ENCODE measurements at regions of chr20 and their contacts with region 1.

Region 1: GRCh38 chr20:6767536-6768227 is at the start of gene BMP2:
- DNase-seq: peak; percentile 74
- H3K4me3 ChIP-seq: peak within 1 kb of the TSS; percentile 87 to 99 (median 92)
- H3K27ac ChIP-seq: peak within 1 kb of the TSS; percentile 61
- H3K4me1 ChIP-seq: peaks cover 21% of the 10 kb centered on the region
- H3K27me3 ChIP-seq: no peaks in the 10 kb centered on the region
- CTCF ChIP-seq: no peak
- POLR2A ChIP-seq: peak; percentile 46
- total RNA-seq, gene BMP2: 11.1 and 15.7 TPM in 2 replicates

Region 2: GRCh38 chr20:6178537-6178936 is 589.1 kb before region 1 on chr20:
- CTCF ChIA-PET with region 1: no interaction called
- POLR2A ChIA-PET with region 1: no interaction called
- dilution Hi-C with region 1: no loop called
- intact Hi-C with region 1: loop called (anchors 5 kb)
- DNase-seq: peak; percentile 67
- H3K4me3 ChIP-seq: no peak overlapping the region
- H3K27ac ChIP-seq: no peak overlapping the region
- H3K4me1 ChIP-seq: no peaks in the 10 kb centered on the region
- H3K27me3 ChIP-seq: peaks cover 0 to 2% of the 10 kb centered on the region in 2 experiments
- CTCF ChIP-seq: peak; percentile 29 to 36
- POLR2A ChIP-seq: no peak

Region 3: GRCh38 chr20:6583134-6583738 is 184.4 kb before region 1 on chr20:
- CTCF ChIA-PET with region 1: interaction called, 18 read pairs
- POLR2A ChIA-PET with region 1: no interaction called
- dilution Hi-C with region 1: no loop called
- intact Hi-C with region 1: loop called (anchors 1 kb)
- DNase-seq: peak; percentile 78
- H3K4me3 ChIP-seq: no peak overlapping the region
- H3K27ac ChIP-seq: peak overlapping the region; percentile 24
- H3K4me1 ChIP-seq: peaks cover 15% of the 10 kb centered on the region
- H3K27me3 ChIP-seq: no peaks in the 10 kb centered on the region
- CTCF ChIP-seq: peak; percentile 56 to 61
- POLR2A ChIP-seq: no peak

Region 4: GRCh38 chr20:6700563-6701329 is 66.9 kb before region 1 on chr20:
- CTCF ChIA-PET with region 1: interaction called, 7 read pairs
- POLR2A ChIA-PET with region 1: no interaction called
- dilution Hi-C with region 1: no loop called
- intact Hi-C with region 1: loop called (anchors 2 kb)
- DNase-seq: peak; percentile 90
- H3K4me3 ChIP-seq: no peak overlapping the region
- H3K27ac ChIP-seq: peak overlapping the region; percentile 45
- H3K4me1 ChIP-seq: peaks cover 68% of the 10 kb centered on the region
- H3K27me3 ChIP-seq: no peaks in the 10 kb centered on the region
- CTCF ChIP-seq: no peak
- POLR2A ChIP-seq: no peak

Region 5: GRCh38 chr20:6746901-6747609 is 20.6 kb before region 1 on chr20:
- CTCF ChIA-PET with region 1: no interaction called
- POLR2A ChIA-PET with region 1: no interaction called
- dilution Hi-C with region 1: no loop called
- intact Hi-C with region 1: loop called (anchors 2 kb)
- DNase-seq: peak; percentile 69
- H3K4me3 ChIP-seq: no peak overlapping the region
- H3K27ac ChIP-seq: no peak overlapping the region
- H3K4me1 ChIP-seq: peaks cover 13% of the 10 kb centered on the region
- H3K27me3 ChIP-seq: peaks cover 5 to 6% of the 10 kb centered on the region in 2 experiments
- CTCF ChIP-seq: no peak
- POLR2A ChIP-seq: no peak

Region 6: DNA sequence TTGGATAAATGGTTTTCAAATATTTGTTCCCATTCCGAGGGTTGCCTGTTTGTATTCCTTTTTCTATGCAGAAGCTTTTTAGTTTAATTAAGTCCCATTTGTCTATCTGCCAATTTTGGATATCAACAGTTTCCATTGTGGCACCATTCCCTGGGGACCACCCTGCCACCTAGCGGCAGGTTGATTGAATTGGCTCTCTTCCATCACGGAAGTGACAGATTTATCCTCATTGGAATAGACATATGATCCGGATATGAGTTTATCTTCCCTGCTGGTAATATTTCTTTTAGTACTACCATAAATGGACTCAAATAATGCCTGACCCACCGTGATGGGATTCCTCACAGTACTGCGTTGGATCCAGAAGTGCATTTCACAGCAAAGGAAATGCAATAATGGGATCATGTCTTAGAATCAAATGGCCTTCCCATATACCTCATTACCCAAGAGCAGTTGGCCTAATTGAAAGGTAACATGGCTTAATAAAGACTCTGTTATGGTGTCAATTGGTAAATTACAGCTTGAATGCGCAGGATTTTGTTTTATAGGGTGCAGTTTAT is 326.8 kb after region 1 on chr20:
- CTCF ChIA-PET with region 1: no interaction called
- POLR2A ChIA-PET with region 1: no interaction called
- dilution Hi-C with region 1: no loop called
- intact Hi-C with region 1: loop called (anchors 5 kb)
- DNase-seq: peak; percentile 46
- H3K4me3 ChIP-seq: no peak overlapping the region
- H3K27ac ChIP-seq: no peak overlapping the region
- H3K4me1 ChIP-seq: peaks cover 6% of the 10 kb centered on the region
- H3K27me3 ChIP-seq: no peaks in the 10 kb centered on the region
- CTCF ChIP-seq: peak; percentile 52 to 60
- POLR2A ChIP-seq: no peak

Region 7: DNA sequence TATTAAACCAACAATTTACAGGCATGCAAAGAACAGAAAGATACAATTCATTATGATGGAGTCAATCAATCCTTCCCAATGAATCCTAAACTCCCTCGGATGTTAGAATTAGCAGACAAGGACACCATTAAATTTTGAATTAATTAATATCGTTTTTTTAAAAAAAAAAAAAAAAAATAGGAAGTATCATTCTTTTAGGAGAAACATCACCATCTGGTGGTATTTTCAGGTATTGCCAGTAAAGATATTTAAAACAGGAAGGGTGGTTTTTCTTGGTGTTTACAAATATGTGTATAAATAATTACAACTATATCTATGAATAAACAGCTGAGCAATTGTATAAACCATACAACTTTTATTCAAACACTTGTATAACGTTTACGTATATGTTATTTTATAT is 608.2 kb after region 1 on chr20:
- CTCF ChIA-PET with region 1: no interaction called
- POLR2A ChIA-PET with region 1: no interaction called
- dilution Hi-C with region 1: no loop called
- intact Hi-C with region 1: loop called (anchors 5 kb)
- DNase-seq: peak; percentile 34
- H3K4me3 ChIP-seq: no peak overlapping the region
- H3K27ac ChIP-seq: no peak overlapping the region
- H3K4me1 ChIP-seq: no peaks in the 10 kb centered on the region
- H3K27me3 ChIP-seq: no peaks in the 10 kb centered on the region
- CTCF ChIP-seq: peak; percentile 9 to 23
- POLR2A ChIP-seq: no peak